GM12878 (cell line): ENCODE measurements at regions of chr6 and their contacts with region 1.

Region 1: GRCh38 chr6:37018198-37019064 is 13.0 kb downstream of the FGD2 start:
- DNase-seq: peak; percentile 61
- ATAC-seq: peak; percentile 100
- H3K4me3 ChIP-seq: no peak overlapping the region
- H3K27ac ChIP-seq: no peak overlapping the region
- H3K4me1 ChIP-seq: peaks cover 7% of the 10 kb centered on the region; the same call in 1 of the 2 replicates
- H3K27me3 ChIP-seq: no peaks in the 10 kb centered on the region
- CTCF ChIP-seq: peak; percentile 96 to 99 (median 97); a peak in 5 of 6 replicates
- EP300 ChIP-seq: no peak
- POLR2A ChIP-seq: no peak
- RAD21 ChIP-seq: peak; percentile 96

Region 2: GRCh38 chr6:36809941-36810803 is 208.3 kb before region 1 on chr6:
- CTCF ChIA-PET with region 1: interaction called, 10 read pairs
- POLR2A ChIA-PET with region 1: no interaction called
- RAD21 ChIA-PET with region 1: no interaction called
- SMC1A ChIA-PET with region 1: no interaction called
- in situ Hi-C with region 1: no loop called
- intact Hi-C with region 1: no loop called
- DNase-seq: no peak
- ATAC-seq: no peak
- H3K4me3 ChIP-seq: no peak overlapping the region
- H3K27ac ChIP-seq: no peak overlapping the region
- H3K4me1 ChIP-seq: no peaks in the 10 kb centered on the region
- H3K27me3 ChIP-seq: no peaks in the 10 kb centered on the region; a peak in 1 of 4 replicates
- CTCF ChIP-seq: no peak
- EP300 ChIP-seq: no peak
- POLR2A ChIP-seq: no peak
- RAD21 ChIP-seq: no peak

Region 3: GRCh38 chr6:36885461-36886401 is 132.7 kb before region 1 on chr6 and contains the start of gene C6orf89:
- CTCF ChIA-PET with region 1: interaction called, 118 read pairs
- POLR2A ChIA-PET with region 1: interaction called, 5 read pairs
- RAD21 ChIA-PET with region 1: interaction called, 54 read pairs
- SMC1A ChIA-PET with region 1: interaction called, 30 read pairs
- in situ Hi-C with region 1: no loop called
- intact Hi-C with region 1: loop called (anchors 1 kb)
- DNase-seq: peak; percentile 92
- ATAC-seq: peak; percentile 98
- H3K4me3 ChIP-seq: peak within 1 kb of the TSS; percentile 99
- H3K27ac ChIP-seq: peak within 1 kb of the TSS; percentile 77
- H3K4me1 ChIP-seq: no peaks in the 10 kb centered on the region
- H3K27me3 ChIP-seq: no peaks in the 10 kb centered on the region
- CTCF ChIP-seq: peak; percentile 72 to 83 (median 79)
- EP300 ChIP-seq: no peak
- POLR2A ChIP-seq: peak; percentile 88
- RAD21 ChIP-seq: peak; percentile 24; the same call in 1 of the 2 replicates
- polyA plus RNA-seq, gene C6orf89: 10.8 to 11.4 TPM

Region 4: GRCh38 chr6:36985808-36986703 is 32.4 kb before region 1 on chr6 and contains the start of gene MTCH1:
- CTCF ChIA-PET with region 1: interaction called, 49 read pairs
- POLR2A ChIA-PET with region 1: interaction called, 4 read pairs
- RAD21 ChIA-PET with region 1: interaction called, 35 read pairs
- SMC1A ChIA-PET with region 1: interaction called, 60 read pairs
- in situ Hi-C with region 1: no loop called
- intact Hi-C with region 1: loop called (anchors 1 kb)
- DNase-seq: peak; percentile 43
- ATAC-seq: peak; percentile 93
- H3K4me3 ChIP-seq: peak within 1 kb of the TSS; percentile 93
- H3K27ac ChIP-seq: peak within 1 kb of the TSS; percentile 90
- H3K4me1 ChIP-seq: peaks cover 9% of the 10 kb centered on the region
- H3K27me3 ChIP-seq: no peaks in the 10 kb centered on the region; a peak in 1 of 4 replicates
- CTCF ChIP-seq: no peak
- EP300 ChIP-seq: no peak
- POLR2A ChIP-seq: peak; percentile 96
- RAD21 ChIP-seq: no peak
- polyA plus RNA-seq, gene MTCH1: 7.2 to 17.3 TPM

Region 5: DNA sequence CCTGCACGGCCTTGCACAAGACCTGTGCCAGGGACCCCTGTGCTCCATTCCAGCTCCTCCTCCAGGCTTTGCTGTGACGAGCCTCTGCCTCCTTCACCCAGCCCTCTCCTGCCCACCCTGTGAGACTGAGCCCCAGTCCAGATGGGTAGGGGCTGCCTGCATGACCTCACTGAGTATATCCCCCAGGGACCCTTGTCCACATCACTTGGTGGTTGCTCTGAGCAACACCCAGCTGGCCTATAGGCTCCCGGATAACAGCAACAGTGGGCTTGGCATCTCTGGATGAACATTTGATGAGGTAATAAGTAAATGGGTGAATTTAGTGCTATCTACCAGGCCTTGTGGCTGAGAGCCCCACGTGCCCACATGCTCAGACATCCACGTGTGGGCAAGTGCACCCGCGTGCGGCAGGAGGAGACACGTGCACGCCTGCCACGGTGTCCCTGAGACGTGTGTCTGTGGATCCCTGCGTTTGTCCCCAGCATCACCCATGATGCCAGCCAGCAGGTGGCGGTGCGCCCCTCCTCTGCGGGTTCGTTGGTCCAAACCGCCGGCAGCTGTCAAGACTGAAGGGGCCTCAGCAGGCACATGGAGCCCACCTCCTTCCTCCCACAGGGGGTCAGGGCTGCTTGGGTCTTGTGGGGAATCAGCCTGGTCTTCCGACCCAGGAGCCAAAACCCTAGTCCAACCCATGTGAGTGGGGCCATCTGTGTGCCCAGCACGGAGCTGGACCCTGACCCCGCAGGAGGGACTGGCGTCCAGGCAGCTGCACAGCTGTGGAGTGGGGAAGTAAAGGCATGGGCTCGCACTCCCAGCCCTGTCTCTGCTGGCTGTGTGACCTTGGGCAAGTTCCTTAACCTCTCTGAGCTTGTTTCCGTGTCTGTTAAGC is 33.0 kb after region 1 on chr6:
- CTCF ChIA-PET with region 1: interaction called, 66 read pairs
- POLR2A ChIA-PET with region 1: no interaction called
- RAD21 ChIA-PET with region 1: interaction called, 7 read pairs
- SMC1A ChIA-PET with region 1: interaction called, 19 read pairs
- in situ Hi-C with region 1: no loop called
- intact Hi-C with region 1: no loop called
- DNase-seq: peak; percentile 59
- ATAC-seq: peak; percentile 88
- H3K4me3 ChIP-seq: no peak overlapping the region
- H3K27ac ChIP-seq: no peak overlapping the region
- H3K4me1 ChIP-seq: peaks cover 40% of the 10 kb centered on the region
- H3K27me3 ChIP-seq: no peaks in the 10 kb centered on the region
- CTCF ChIP-seq: peak; percentile 88 to 95 (median 93); a peak in 5 of 6 replicates
- EP300 ChIP-seq: no peak
- POLR2A ChIP-seq: no peak
- RAD21 ChIP-seq: peak; percentile 93

Region 6: GRCh38 chr6:37200085-37200484 is 181.7 kb after region 1 on chr6:
- CTCF ChIA-PET with region 1: interaction called, 18 read pairs
- POLR2A ChIA-PET with region 1: no interaction called
- RAD21 ChIA-PET with region 1: interaction called, 3 read pairs
- SMC1A ChIA-PET with region 1: interaction called, 6 read pairs
- in situ Hi-C with region 1: loop called (anchors 10 kb)
- intact Hi-C with region 1: no loop called
- DNase-seq: no peak
- ATAC-seq: no peak
- H3K4me3 ChIP-seq: no peak overlapping the region
- H3K27ac ChIP-seq: no peak overlapping the region
- H3K4me1 ChIP-seq: no peaks in the 10 kb centered on the region; the same call in 1 of the 2 replicates
- H3K27me3 ChIP-seq: no peaks in the 10 kb centered on the region
- CTCF ChIP-seq: no peak
- EP300 ChIP-seq: no peak
- POLR2A ChIP-seq: no peak
- RAD21 ChIP-seq: no peak